PC-9 (cell line): ENCODE measurements at regions of chr1 and their contacts with region 1.

Region 1: DNA sequence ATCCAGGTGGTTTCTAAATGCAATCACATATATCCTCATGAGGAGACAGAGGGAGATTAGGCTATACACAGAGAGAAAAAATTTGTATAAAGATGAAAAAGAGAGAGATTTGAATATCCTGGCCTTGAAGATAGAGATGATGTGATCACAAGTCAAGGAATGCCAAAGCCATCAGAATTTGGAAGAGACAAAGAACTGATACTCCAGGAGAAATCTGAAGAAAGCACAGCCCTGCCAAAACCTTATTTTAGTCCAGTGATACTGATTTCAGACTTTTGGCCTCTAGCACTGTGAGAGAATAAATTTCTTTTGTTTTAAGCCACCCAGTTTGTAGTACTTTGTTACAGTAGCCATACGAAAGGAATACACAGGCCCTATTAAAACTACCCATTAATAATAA is 33.4 kb downstream of the DOCK7 start:
- DNase-seq: no peak
- H3K4me3 ChIP-seq: no peak overlapping the region
- H3K27ac ChIP-seq: no peak overlapping the region
- H3K4me1 ChIP-seq: no peaks in the 10 kb centered on the region
- H3K27me3 ChIP-seq: no peaks in the 10 kb centered on the region
- CTCF ChIP-seq: no peak

Region 2: GRCh38 chr1:61424382-61424781 is 1230.4 kb before region 1 on chr1:
- CTCF ChIA-PET with region 1: no interaction called
- POLR2A ChIA-PET with region 1: no interaction called
- intact Hi-C with region 1: no loop called
- DNase-seq: peak; percentile 34 to 94
- H3K4me3 ChIP-seq: no peak overlapping the region
- H3K27ac ChIP-seq: peak overlapping the region; percentile 56
- H3K4me1 ChIP-seq: peaks cover 33% of the 10 kb centered on the region
- H3K27me3 ChIP-seq: no peaks in the 10 kb centered on the region
- CTCF ChIP-seq: no peak

Region 3: GRCh38 chr1:62508187-62508758 is 146.5 kb before region 1 on chr1:
- CTCF ChIA-PET with region 1: no interaction called
- POLR2A ChIA-PET with region 1: no interaction called
- intact Hi-C with region 1: no loop called
- DNase-seq: peak; percentile 3 to 37
- H3K4me3 ChIP-seq: no peak overlapping the region
- H3K27ac ChIP-seq: no peak overlapping the region
- H3K4me1 ChIP-seq: no peaks in the 10 kb centered on the region
- H3K27me3 ChIP-seq: no peaks in the 10 kb centered on the region
- CTCF ChIP-seq: peak; percentile 70

Region 4: DNA sequence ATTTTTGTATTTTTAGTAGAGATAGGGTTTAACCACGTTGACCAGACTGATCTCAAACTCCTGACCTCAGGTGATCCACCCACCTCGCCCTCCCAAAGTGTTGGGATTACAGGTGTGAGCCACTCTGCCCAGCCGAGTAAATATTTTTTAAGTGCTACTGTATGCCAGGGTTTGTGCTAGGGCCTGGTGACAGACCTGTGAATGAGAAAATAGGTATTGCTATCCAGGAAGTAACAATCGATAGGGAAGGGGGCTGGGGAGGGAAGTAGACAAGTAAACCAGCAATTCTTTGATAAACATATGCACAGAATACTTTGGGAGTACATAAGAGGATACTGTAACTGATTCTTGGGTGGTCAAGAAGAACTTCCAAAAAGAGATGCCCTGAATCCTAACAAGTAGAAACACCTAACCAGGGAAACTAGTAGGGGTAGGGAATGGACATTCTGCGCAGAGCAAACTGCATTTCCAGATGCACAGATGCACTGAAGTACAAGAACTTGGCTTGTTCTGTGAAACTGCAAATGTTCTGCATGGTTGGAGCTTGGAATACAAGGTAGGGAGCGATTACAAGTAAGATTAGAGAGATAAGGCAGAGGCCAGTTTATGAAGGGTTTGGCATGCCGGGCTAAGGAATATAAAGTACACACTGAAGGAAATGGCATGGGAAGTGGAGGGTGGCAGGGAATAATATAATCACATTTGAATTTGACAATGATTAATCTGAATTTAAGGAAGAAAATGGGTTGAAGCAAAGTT is 52.4 kb after region 1 on chr1:
- CTCF ChIA-PET with region 1: no interaction called
- POLR2A ChIA-PET with region 1: interaction called, 24 read pairs
- intact Hi-C with region 1: no loop called
- DNase-seq: peak in 1 of 2 experiments; percentile 38
- H3K4me3 ChIP-seq: no peak overlapping the region
- H3K27ac ChIP-seq: no peak overlapping the region
- H3K4me1 ChIP-seq: no peaks in the 10 kb centered on the region
- H3K27me3 ChIP-seq: no peaks in the 10 kb centered on the region
- CTCF ChIP-seq: no peak

Region 5: DNA sequence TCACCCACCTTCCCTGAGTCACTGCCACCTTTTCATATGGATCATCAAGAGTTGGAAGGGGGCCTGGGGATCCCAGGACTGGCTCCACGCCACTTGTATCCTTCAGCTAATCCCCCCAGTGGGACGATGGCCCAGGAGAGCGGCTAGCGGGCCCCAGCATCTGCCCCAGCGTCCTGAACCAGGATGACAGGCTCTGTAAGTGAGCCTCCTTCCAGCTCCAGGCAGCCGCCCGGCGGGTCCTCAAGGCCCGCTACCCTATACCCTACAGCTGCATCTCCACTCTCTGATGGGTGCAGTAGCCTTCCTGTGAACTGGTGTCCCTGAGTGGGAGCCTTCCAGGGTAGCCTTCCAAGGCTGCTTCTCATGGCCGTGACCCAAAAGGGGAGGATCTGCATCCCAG is 312.3 kb after region 1 on chr1:
- CTCF ChIA-PET with region 1: no interaction called
- POLR2A ChIA-PET with region 1: no interaction called
- intact Hi-C with region 1: no loop called
- DNase-seq: no peak
- H3K4me3 ChIP-seq: no peak overlapping the region
- H3K27ac ChIP-seq: no peak overlapping the region
- H3K4me1 ChIP-seq: no peaks in the 10 kb centered on the region
- H3K27me3 ChIP-seq: peaks cover 66% of the 10 kb centered on the region
- CTCF ChIP-seq: no peak